ENCODE measurements at regions of chr3 and their contacts with region 1.

Region 1: DNA sequence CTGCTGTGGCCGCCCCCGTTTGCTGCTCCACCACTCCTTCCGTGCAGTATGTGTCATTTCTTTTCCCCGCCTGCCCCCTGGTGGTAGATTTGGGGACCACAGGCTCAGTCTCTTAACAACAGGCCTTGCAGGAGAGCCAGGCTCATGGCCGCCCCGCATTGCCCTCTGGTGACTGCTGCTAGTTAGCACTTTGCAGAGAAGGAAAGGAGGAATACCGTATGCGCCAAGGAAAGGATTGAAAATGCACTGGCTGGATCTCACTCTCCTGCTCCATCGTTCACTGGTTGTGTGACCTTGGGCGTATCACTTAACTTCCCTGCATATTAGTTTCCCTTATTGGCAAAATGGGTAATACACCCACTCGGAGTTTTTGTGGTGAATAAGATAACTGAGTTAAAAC is 39.3 kb upstream of the PXYLP1 start:
- DNase-seq: peak; percentile 99
- ATAC-seq: peak; percentile 100
- H3K4me3 Mint-ChIP-seq: no peak overlapping the region
- H3K27ac Mint-ChIP-seq: no peak overlapping the region
- H3K4me1 Mint-ChIP-seq: peaks cover 15% of the 10 kb centered on the region
- H3K27me3 Mint-ChIP-seq: peaks cover 3% of the 10 kb centered on the region
- CTCF ChIP-seq: peak; percentile 99

Region 2: GRCh38 chr3:141000027-141000663 is 192.2 kb before region 1 on chr3:
- CTCF ChIA-PET with region 1: interaction called, 70 read pairs
- POLR2A ChIA-PET with region 1: no interaction called
- intact Hi-C with region 1: loop called (anchors 2 kb)
- DNase-seq: peak; percentile 72
- ATAC-seq: peak; percentile 88
- H3K4me3 Mint-ChIP-seq: no peak overlapping the region
- H3K27ac Mint-ChIP-seq: no peak overlapping the region
- H3K4me1 Mint-ChIP-seq: peaks cover 6% of the 10 kb centered on the region
- H3K27me3 Mint-ChIP-seq: peaks cover 1% of the 10 kb centered on the region
- CTCF ChIP-seq: peak; percentile 81

Region 3: DNA sequence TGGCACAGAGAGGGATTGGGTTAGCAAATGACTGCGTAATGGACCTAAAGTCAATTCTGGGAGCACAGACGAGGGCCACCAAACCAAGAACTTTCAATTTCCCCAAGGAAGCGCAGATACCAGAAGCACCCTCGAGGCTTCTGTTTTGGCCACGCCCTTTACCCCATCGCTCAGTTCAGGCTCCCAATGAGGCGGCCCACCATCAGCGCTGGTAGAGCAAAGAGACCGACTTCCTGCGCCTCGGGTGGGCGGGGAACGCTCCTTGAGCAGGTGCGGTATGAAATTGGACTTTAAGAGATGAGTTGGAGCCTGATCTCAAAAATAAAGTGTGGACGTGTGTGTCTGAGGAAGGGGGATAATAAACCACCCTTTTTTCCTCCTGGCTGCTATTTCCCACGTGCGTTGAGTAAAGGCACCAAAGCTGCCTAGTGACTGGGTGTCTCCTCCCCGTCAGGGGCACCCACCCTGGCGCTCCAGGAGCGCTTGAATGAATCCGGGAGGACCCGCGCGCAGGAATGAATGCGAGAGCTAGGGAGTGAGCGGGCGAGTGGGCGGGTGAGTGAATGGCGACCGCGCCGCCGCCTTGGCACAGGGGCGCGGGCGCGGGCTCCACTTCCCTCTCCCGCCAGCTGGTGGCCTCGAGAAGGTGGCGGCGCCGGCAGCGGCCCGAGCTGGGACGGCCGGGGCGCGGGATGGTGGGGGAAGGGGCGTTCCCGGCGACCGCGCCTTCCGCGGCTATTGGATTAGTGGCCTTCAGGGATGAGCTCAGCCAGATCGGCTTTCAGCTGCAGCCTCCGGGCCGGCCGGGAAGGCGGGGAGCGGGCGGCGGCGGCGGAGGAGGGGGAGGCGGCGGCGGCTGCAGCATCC is 141.5 kb before region 1 on chr3 and contains the start of gene SPSB4:
- CTCF ChIA-PET with region 1: interaction called, 10 read pairs
- POLR2A ChIA-PET with region 1: no interaction called
- intact Hi-C with region 1: no loop called
- DNase-seq: peak; percentile 61
- ATAC-seq: peak; percentile 75
- H3K4me3 Mint-ChIP-seq: peak within 1 kb of the TSS; percentile 66
- H3K27ac Mint-ChIP-seq: no peak within 1 kb of the TSS
- H3K4me1 Mint-ChIP-seq: peaks cover 11% of the 10 kb centered on the region
- H3K27me3 Mint-ChIP-seq: peaks cover 57% of the 10 kb centered on the region
- CTCF ChIP-seq: peak; percentile 54
- total RNA-seq, gene SPSB4: not detected

Region 4: DNA sequence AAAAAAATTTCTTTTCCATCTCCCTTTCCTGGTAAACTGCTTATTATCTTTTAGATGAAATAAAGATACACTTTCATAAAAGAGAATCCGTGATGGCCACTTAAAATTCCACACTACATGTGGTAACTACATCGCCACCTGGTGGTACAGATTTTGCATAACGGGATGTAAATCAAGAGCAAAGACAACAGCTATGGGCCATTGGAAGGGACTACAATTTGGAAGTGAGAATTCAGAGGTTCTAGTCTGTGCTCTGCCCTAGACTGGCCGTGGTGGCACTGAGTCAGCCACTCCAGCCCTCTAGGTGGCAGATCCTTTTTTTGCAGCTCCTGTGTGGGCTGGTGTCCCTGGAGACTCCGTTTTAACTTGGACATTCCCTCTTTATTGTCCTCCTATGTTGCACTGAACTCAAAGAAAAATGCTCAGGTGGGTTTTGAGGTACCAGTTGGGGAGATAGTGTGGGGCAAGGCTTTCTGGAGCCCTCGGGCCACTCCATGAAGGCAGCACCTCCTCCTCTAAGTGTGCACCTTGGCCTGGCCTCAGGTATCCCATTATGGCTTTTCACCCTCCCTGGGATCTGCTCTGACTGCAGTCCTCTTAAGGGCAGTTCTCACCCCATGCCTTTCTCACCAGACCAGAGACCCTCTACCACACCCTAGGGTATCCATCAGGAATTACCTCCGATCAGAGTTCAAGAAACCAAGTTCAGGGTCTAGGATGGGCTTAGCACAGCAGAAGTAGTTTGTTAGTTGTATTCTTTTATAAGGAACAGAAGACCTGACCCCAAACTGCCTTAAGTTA is 86.3 kb before region 1 on chr3:
- CTCF ChIA-PET with region 1: interaction called, 14 read pairs
- POLR2A ChIA-PET with region 1: no interaction called
- intact Hi-C with region 1: loop called (anchors 5 kb)
- DNase-seq: peak; percentile 87
- ATAC-seq: peak; percentile 85
- H3K4me3 Mint-ChIP-seq: no peak overlapping the region
- H3K27ac Mint-ChIP-seq: no peak overlapping the region
- H3K4me1 Mint-ChIP-seq: no peaks in the 10 kb centered on the region
- H3K27me3 Mint-ChIP-seq: no peaks in the 10 kb centered on the region
- CTCF ChIP-seq: peak; percentile 74

Measured in activated CD8-positive, alpha-beta T cell treated with anti-CD3 and anti-CD28 coated beads for 36 hours (primary cell).